GM23248 (cell line): ENCODE measurements at regions of chr6 and their contacts with region 1.

Region 1: DNA sequence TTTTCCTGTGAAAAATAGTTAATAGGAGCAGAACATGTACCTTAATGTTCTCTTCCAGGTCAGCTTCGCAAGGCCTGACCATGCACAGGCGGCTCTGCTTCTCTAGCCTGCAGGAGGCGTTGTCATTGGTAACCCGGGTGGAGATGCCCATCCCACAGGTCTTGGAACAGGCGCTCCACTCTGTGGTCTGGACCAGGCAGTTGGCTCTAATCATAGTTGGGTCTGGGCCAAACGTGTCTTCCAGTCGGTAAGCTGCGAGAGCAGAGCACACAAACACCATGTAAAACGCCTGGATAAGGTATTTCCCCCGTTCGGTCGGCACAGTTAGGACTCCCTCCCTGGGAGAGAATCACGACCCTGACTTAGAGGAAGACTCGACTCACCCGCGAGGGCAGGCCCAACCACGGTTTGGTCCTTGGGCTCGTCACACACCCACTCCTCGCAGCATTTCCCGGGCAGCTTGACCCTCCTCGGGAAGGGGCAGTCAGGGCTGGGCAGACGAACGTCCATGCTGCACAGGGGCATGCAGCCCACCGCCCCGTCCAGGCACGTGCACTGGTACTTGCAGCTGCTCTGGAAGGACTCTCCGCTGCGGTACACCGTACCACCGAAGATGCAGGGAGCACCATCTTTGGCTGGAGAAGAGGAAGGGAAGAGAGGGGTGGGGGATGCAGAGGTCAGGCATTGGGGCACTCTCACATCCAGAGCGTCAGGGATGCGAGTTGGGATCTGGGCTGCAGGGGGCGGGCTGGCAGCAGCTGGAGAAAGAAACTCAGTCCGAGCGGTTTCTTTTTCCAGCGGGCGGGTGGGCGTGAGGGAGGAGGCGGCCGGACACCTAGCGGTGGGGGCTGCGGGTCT is 1.0 kb downstream of the CCN2 start:
- DNase-seq: peak; percentile 95
- H3K4me3 ChIP-seq: peak overlapping the region; percentile 85
- H3K27ac ChIP-seq: peak overlapping the region; percentile 91
- H3K4me1 ChIP-seq: peaks cover 46% of the 10 kb centered on the region
- H3K27me3 ChIP-seq: no peaks in the 10 kb centered on the region

Region 2: DNA sequence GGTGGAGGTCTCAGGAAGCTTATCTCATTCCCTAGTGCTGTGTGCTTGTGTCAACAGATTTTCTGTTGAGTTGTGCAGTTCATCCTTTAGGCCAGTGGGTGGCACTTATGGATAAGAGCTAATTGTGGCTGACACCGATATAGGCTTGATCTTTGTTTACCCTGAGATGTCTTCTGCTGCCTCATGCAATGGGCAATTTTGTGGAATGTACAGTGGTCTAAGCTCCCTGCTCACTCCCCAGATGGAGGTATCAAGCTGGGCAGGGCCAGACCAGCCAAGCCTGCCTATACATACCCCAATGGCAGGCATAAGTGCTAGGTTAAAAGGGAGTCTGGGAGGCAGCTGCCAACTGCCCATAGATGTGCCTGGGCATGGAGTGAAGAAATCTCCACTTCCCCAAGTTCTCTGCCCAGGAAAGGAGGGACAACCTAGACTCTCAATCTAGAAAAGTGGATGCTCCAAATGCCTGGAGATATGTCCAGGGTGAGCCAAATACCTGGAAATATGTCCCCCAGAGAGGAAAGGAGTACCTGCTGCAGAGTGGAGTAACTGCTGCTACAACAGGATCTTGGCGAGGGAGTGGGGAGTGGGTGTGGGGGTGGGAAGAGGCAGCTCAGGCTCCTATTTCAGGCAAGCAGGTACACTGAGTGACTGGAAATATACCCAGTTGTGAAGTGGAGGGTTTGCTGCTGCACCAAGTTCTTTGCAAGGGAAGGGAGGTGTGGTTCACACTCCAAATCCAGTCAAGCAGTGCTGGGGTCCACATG is 430.3 kb before region 1 on chr6:
- in situ Hi-C with region 1: no loop called
- DNase-seq: peak; percentile 68
- H3K4me3 ChIP-seq: no peak overlapping the region
- H3K27ac ChIP-seq: no peak overlapping the region
- H3K4me1 ChIP-seq: no peaks in the 10 kb centered on the region
- H3K27me3 ChIP-seq: peaks cover 6% of the 10 kb centered on the region; the same call in 1 of the 2 replicates

Region 3: DNA sequence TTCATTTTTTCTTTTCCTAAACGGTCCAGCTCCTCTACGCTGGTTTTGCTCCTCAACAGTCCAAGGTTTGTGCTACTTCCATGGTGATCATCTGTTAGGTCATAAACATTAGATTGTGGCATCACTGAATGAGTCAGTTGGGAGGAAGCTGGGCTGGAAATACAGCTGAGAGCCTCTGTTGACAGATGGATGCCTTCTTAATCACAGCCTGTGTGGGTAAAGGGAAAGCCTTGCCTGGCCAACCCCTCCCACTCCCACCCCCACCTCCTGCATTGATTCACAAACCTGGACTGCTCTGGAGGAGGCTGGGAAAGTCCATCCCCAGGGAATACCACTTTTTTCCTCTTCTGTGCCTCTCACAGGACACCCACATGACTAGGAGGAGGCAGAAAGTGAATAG is 181.6 kb after region 1 on chr6:
- in situ Hi-C with region 1: loop called (anchors 25 kb)
- DNase-seq: peak; percentile 98
- H3K4me3 ChIP-seq: peak overlapping the region; percentile 35
- H3K27ac ChIP-seq: peak overlapping the region; percentile 99
- H3K4me1 ChIP-seq: peaks cover 49% of the 10 kb centered on the region
- H3K27me3 ChIP-seq: no peaks in the 10 kb centered on the region

Region 4: DNA sequence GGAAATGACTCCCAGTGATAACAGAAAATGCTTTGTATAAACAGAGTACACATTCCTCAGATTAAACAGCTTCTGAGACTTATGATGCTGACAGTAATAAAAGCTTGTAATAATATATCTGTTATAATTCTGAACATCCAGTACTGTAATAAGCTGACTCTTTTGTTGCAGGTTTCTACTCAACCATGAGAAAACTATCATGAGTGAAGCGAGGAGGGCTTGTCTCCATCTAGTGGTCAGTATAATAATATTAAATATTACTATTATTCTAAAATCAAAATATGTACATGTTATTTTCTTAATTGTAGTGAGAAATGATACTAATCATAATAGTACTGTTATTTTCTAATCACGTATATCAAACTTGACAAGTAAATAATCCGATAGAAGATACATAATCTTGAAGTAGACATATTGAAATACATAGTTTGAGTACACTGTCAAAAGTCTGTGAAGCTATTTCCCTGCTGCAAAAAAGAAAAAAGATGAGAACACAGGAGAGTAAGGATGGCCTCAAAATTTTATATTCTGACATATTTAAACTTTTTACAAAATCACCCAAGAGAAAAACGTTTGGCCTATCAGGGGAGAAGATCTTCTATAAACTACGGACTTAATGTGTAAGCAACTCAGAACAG is 268.0 kb after region 1 on chr6:
- in situ Hi-C with region 1: loop called (anchors 25 kb)
- DNase-seq: peak; percentile 69
- H3K4me3 ChIP-seq: no peak overlapping the region
- H3K27ac ChIP-seq: no peak overlapping the region
- H3K4me1 ChIP-seq: peaks cover 5% of the 10 kb centered on the region; the same call in 1 of the 2 replicates
- H3K27me3 ChIP-seq: no peaks in the 10 kb centered on the region